ENCODE measurements at regions of chr9 and their contacts with region 1.

Region 1: GRCh38 chr9:129626079-129626624 is at the start of gene NTMT1:
- DNase-seq: peak; percentile 88 to 91 (median 90)
- H3K4me3 ChIP-seq: peak within 1 kb of the TSS; percentile 80 to 98
- H3K4me3 Mint-ChIP-seq: peak within 1 kb of the TSS; percentile 84 to 93 (median 89)
- H3K27ac ChIP-seq: peak within 1 kb of the TSS; percentile 91
- H3K27ac Mint-ChIP-seq: peak within 1 kb of the TSS; percentile 89 to 96 (median 95)
- H3K4me1 ChIP-seq: peaks cover 48% of the 10 kb centered on the region
- H3K4me1 Mint-ChIP-seq: peaks cover 27 to 72% (median 53%) of the 10 kb centered on the region in 4 donors
- H3K27me3 ChIP-seq: peaks cover under 1% of the 10 kb centered on the region
- H3K27me3 Mint-ChIP-seq: peaks cover 5 to 14% of the 10 kb centered on the region in 2 donors
- total RNA-seq, gene NTMT1: 45.0 to 45.3 TPM

Region 2: DNA sequence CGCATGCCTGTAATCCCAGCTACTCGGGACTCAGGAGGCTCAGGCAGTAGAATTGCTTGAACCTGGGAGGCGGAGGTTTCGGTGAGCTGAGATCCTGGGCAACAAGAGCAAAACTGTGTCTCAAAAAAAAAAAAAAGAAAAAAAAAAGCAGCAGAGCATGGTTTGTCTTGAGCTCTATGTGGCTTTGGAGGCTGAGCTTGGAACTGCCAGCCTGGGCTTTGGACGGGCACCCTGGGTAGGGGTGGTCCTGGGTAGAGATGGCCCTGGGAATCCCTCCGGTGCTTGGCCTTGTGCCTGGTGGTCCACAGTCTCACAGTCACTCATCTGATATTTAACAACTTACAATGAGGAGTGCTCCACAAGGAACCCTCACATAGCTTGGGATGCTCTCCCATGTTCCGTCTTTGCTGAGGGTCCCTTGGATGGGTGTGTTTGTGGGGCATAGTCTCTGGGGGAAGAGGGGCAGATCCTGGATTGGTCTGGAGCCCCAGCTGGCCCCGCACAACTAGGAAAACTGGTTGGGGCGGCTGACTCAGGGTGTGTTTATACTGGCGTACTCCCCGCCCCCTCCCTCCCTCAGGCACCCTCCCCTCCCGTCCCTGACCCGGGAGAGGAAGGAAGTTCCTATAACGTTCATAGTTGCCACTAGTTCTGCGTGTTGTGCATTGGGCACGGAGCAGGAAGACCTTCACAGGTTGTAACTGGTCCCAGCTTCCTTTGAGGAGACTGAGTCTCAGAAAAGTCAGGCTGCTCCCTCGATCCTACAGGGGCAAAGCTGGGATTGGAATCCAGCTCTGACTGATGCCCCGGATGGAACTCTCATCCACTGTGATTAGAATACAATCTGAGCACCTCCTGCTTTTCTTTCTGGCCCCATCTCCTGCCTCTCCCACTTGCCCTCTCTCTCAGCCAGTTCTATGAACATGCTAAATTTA is 459.3 kb before region 1 on chr9:
- CTCF ChIA-PET with region 1: interaction called, 42 read pairs
- POLR2A ChIA-PET with region 1: interaction called, 4 read pairs
- intact Hi-C with region 1: no loop called
- DNase-seq: peak in 1 of 5 donors; percentile 4
- H3K4me3 ChIP-seq: no peak overlapping the region
- H3K4me3 Mint-ChIP-seq: peak overlapping the region in 6 of 8 donors; percentile 43 to 74 (median 67)
- H3K27ac ChIP-seq: no peak overlapping the region
- H3K27ac Mint-ChIP-seq: peak overlapping the region in 3 of 7 donors; percentile 13 to 52 (median 52)
- H3K4me1 ChIP-seq: peaks cover 11% of the 10 kb centered on the region
- H3K4me1 Mint-ChIP-seq: peaks cover 10 to 26% (median 12%) of the 10 kb centered on the region in 4 donors
- H3K27me3 ChIP-seq: no peaks in the 10 kb centered on the region
- H3K27me3 Mint-ChIP-seq: no peaks in the 10 kb centered on the region

Region 3: DNA sequence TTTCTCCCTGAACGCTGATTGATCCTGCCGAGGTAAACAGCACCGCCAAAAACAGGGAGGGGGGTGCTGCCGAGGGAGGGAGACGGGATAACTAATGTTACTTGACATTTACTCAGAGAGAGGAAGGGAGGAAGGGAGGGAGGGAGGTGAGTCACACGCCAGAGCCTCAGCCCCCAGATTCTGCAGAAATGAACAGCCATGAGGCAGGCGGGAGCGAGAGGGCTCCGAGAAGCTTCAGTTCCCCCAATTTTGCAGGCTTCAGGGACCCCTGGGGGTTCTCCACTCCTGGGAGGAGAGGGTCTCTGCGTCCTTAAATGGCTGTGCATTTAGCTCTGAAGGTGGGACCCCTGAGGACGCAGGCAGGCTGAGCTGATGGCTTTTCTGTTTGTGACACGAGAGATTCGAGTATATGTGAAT is 388.9 kb before region 1 on chr9:
- CTCF ChIA-PET with region 1: interaction called, 3 read pairs
- POLR2A ChIA-PET with region 1: interaction called, 16 read pairs
- intact Hi-C with region 1: no loop called
- DNase-seq: peak in 2 of 5 donors; percentile 18 to 66
- H3K4me3 ChIP-seq: peak overlapping the region in 1 of 2 donors; percentile 47
- H3K4me3 Mint-ChIP-seq: peak overlapping the region; percentile 76 to 88 (median 86)
- H3K27ac ChIP-seq: peak overlapping the region; percentile 29
- H3K27ac Mint-ChIP-seq: peak overlapping the region; percentile 88 to 96 (median 93)
- H3K4me1 ChIP-seq: peaks cover 52% of the 10 kb centered on the region
- H3K4me1 Mint-ChIP-seq: peaks cover 39 to 63% (median 51%) of the 10 kb centered on the region in 4 donors
- H3K27me3 ChIP-seq: no peaks in the 10 kb centered on the region
- H3K27me3 Mint-ChIP-seq: no peaks in the 10 kb centered on the region

Region 4: DNA sequence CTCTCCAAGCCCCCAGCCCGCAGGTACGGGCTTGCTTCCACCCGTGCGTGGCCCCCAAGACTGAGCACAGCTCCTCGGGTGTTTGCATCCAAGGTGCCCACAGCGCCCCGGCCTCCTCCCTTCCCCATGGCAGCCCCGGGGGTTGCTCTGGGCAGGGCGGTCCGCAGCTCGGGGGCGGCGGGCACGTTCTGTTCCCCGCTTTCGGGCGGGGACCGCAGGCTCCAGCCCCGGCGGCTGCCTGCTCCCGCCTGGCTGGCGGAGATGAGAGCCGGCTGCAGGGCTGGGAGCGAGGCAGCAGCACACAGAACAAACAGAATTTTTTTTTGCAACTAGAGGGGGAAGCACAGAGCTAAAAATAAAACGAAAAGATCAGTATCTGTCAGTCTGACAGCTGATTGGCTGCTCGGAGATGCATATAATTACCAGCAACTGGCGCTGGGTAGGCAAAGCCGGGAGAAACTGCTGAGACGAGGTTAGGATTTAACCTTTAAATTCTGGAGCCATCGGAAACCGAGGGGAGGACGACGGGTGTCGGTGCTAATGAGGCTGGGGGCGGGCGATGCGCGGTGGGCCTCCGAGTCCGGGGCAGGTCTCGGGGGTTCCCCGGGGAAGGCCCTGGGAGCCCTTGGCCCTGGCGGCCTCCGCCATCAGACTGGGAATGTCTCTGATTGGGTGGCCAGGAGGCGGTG is 305.4 kb before region 1 on chr9:
- CTCF ChIA-PET with region 1: interaction called, 13 read pairs
- POLR2A ChIA-PET with region 1: interaction called, 4 read pairs
- intact Hi-C with region 1: no loop called
- DNase-seq: peak; percentile 63 to 74 (median 68)
- H3K4me3 ChIP-seq: peak overlapping the region in 1 of 2 donors; percentile 51
- H3K4me3 Mint-ChIP-seq: peak overlapping the region; percentile 62 to 90 (median 82)
- H3K27ac ChIP-seq: no peak overlapping the region
- H3K27ac Mint-ChIP-seq: peak overlapping the region in 6 of 7 donors; percentile 50 to 97 (median 78)
- H3K4me1 ChIP-seq: peaks cover 20% of the 10 kb centered on the region
- H3K4me1 Mint-ChIP-seq: peaks cover 5 to 20% (median 9%) of the 10 kb centered on the region in 4 donors
- H3K27me3 ChIP-seq: no peaks in the 10 kb centered on the region
- H3K27me3 Mint-ChIP-seq: peaks cover 0 to 1% of the 10 kb centered on the region in 2 donors

Region 5: GRCh38 chr9:129584136-129584535 is 42.0 kb before region 1 on chr9:
- CTCF ChIA-PET with region 1: interaction called, 4 read pairs
- POLR2A ChIA-PET with region 1: no interaction called
- intact Hi-C with region 1: loop called (anchors 1 kb)
- DNase-seq: peak; percentile 59 to 67 (median 62)
- H3K4me3 ChIP-seq: no peak overlapping the region
- H3K4me3 Mint-ChIP-seq: peak overlapping the region in 5 of 8 donors; percentile 19 to 70 (median 32)
- H3K27ac ChIP-seq: no peak overlapping the region
- H3K27ac Mint-ChIP-seq: peak overlapping the region; percentile 20 to 92 (median 83)
- H3K4me1 ChIP-seq: peaks cover 52% of the 10 kb centered on the region
- H3K4me1 Mint-ChIP-seq: peaks cover 26 to 77% (median 52%) of the 10 kb centered on the region in 4 donors
- H3K27me3 ChIP-seq: no peaks in the 10 kb centered on the region
- H3K27me3 Mint-ChIP-seq: no peaks in the 10 kb centered on the region

Region 6: DNA sequence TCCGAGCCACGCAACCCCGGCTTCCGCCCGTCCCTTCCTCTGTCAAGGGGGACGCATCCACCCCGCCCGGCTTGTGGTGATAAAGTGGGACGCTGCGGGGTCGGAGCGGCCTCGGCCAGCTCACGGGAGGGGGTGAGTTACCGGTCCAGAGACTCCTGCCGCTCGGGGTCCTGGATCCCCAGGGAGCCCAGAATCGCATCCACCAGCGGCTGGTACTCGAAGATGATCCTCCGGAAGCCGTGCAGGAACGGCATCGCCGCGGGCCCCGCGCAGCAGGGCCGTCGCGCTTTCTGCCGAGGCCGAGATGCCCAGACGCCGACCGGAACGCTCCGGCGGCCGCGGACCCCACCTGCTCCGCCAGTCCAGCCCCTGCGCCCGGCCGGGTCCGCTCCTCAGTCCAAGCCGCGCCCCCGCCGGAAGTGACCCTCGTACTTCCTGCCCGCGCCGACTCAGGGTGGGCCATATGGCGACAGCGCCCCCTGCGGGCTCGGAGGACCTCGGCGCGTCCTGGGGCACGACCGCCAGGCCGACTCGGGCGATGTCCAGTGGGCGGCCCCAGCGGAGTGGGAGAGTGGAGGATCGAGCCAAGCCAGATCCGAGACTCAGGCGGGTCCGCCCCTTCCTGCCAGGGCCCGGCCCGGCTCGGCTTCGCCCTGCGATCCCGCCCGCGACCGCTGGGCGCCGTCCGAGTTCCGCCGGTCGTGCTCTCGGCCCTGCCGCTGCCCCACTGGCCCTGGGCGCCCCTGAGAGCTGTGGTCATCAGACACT is 15.8 kb after region 1 on chr9 and contains the start of gene ASB6:
- CTCF ChIA-PET with region 1: interaction called, 75 read pairs
- POLR2A ChIA-PET with region 1: interaction called, 55 read pairs
- intact Hi-C with region 1: loop called (anchors 1 kb)
- DNase-seq: peak; percentile 86 to 92 (median 87)
- H3K4me3 ChIP-seq: peak within 1 kb of the TSS; percentile 66 to 95
- H3K4me3 Mint-ChIP-seq: peak within 1 kb of the TSS; percentile 81 to 92 (median 84)
- H3K27ac ChIP-seq: peak within 1 kb of the TSS; percentile 81
- H3K27ac Mint-ChIP-seq: peak within 1 kb of the TSS; percentile 85 to 94 (median 89)
- H3K4me1 ChIP-seq: peaks cover 26% of the 10 kb centered on the region
- H3K4me1 Mint-ChIP-seq: peaks cover 10 to 33% (median 18%) of the 10 kb centered on the region in 4 donors
- H3K27me3 ChIP-seq: no peaks in the 10 kb centered on the region
- H3K27me3 Mint-ChIP-seq: no peaks in the 10 kb centered on the region
- total RNA-seq, gene ASB6: 33.0 to 33.1 TPM

Measured in CD4-positive, alpha-beta memory T cell (primary cell).